Vagina (tissue), 2 donors: ENCODE measurements at regions of chr19 and their contacts with region 1.

Region 1: DNA sequence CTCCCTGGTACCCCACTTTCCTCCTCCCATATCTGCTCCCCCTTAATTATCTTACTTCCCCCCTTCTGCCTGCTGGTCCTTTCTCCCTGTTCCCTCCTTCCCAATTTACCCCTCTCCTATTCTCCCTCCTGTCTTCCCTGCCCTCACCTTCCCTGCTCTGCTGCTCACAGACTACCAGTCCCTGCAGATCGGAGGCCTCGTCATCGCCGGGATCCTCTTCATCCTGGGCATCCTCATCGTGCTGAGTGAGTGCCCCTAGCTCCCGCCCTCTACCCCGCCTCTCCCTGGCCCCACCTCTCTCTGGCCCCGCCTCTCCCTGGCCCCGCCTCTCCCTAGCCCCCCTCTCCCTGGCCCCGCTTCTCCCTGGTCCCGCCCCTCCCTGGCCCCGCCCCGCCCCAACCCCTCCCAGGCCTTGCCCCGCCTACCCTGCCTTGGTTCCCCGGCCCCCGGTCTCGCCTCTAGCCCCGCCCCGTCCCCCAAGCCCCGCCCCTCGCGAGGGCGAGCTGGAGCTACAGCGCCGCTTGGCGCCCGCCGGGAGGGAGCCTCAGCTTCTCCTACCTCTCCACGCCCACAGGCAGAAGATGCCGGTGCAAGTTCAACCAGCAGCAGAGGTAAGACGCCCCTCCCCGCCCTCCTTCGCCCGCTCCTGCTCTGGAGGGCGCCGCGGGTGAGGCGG is 2.0 kb upstream of the FXYD7 start:
- DNase-seq: peak in 1 of 2 donors; percentile 97
- H3K4me3 ChIP-seq: peak overlapping the region; percentile 49 to 59
- H3K27ac ChIP-seq: peak overlapping the region; percentile 96
- H3K4me1 ChIP-seq: peaks cover 65% of the 10 kb centered on the region
- H3K27me3 ChIP-seq: no peaks in the 10 kb centered on the region
- CTCF ChIP-seq: peak in 1 of 3 experiments; percentile 55
- POLR2A ChIP-seq: peak in 1 of 2 donors; percentile 91

Region 2: DNA sequence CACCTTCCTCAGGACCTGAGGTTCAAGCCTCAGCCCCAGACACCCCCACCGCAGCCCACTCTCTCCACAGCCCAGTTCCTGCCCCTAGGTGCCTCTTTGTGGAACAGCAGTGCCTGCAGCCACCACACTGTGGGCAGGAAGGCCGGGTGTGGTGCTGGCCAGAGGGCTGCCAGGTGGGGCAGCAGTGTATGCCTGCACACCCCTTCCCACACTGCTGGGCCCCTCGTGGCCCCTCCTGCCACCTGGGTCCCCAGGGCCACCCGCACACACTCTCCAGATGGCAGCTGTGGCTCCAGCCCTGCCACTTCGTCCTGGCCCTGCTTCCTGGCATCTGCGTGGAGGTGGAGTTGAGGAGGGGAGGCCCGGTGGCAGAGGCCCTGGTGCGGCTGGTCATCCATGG is 64.4 kb before region 1 on chr19:
- intact Hi-C with region 1: loop called (anchors 5 kb)
- DNase-seq: no peak
- H3K4me3 ChIP-seq: no peak overlapping the region
- H3K27ac ChIP-seq: no peak overlapping the region
- H3K4me1 ChIP-seq: no peaks in the 10 kb centered on the region
- H3K27me3 ChIP-seq: no peaks in the 10 kb centered on the region
- CTCF ChIP-seq: no peak
- POLR2A ChIP-seq: no peak

Region 3: DNA sequence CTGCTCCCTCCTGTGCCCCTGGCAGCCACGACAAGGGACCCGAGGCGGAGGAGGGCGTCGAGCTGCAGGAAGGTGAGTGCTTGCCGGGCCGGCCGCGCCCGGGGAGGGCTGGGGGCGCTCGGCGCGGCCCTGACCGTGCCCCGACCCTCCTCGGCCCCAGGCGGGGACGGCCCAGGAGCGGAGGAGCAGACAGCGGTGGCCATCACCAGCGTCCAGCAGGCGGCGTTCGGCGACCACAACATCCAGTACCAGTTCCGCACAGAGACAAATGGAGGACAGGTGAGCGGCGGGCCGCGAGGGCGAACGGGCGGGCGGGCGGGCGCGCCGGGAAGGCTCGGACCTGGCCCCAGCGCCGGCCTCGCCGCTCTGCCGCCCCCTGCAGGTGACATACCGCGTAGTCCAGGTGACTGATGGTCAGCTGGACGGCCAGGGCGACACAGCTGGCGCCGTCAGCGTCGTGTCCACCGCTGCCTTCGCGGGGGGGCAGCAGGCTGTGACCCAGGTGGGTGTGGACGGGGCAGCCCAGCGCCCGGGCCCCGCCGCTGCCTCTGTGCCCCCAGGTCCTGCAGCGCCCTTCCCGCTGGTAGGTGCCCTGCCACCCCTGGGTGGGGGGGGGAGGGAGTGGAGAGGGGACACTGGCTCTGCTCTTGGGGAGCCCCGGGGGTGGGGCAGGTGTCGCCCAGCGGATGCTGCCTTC is 128.5 kb after region 1 on chr19:
- intact Hi-C with region 1: loop called (anchors 5 kb)
- DNase-seq: no peak
- H3K4me3 ChIP-seq: peak overlapping the region; percentile 66 to 76
- H3K27ac ChIP-seq: peak overlapping the region; percentile 89
- H3K4me1 ChIP-seq: peaks cover 55% of the 10 kb centered on the region
- H3K27me3 ChIP-seq: no peaks in the 10 kb centered on the region
- CTCF ChIP-seq: peak; percentile 3 to 48 (median 34)
- POLR2A ChIP-seq: no peak